ENCODE measurements at regions of chr6 and their contacts with region 1.

Region 1: DNA sequence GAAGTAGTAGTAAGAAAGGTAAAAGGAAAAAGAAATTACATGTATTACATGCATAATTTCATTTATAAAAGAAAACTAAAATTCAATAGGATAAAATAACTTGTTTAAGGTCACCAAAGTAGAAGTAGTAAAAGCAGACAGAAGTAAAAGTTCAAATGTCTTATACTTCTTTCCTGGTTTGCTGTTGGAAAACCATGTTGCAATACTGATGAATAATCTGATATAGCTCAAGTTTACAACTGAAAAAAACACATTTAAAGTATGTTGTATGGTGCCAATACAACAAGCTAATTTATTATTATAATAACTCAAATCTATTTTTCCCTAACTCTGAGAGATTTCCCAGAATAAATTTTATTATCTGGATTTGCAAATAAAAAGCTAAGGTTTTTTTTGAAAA is 78.3 kb downstream of the PHIP start:
- DNase-seq: no peak
- ATAC-seq: no peak
- H3K4me3 ChIP-seq: no peak overlapping the region
- H3K27ac ChIP-seq: no peak overlapping the region
- H3K4me1 ChIP-seq: no peaks in the 10 kb centered on the region
- H3K27me3 ChIP-seq: no peaks in the 10 kb centered on the region
- CTCF ChIP-seq: no peak

Region 2: DNA sequence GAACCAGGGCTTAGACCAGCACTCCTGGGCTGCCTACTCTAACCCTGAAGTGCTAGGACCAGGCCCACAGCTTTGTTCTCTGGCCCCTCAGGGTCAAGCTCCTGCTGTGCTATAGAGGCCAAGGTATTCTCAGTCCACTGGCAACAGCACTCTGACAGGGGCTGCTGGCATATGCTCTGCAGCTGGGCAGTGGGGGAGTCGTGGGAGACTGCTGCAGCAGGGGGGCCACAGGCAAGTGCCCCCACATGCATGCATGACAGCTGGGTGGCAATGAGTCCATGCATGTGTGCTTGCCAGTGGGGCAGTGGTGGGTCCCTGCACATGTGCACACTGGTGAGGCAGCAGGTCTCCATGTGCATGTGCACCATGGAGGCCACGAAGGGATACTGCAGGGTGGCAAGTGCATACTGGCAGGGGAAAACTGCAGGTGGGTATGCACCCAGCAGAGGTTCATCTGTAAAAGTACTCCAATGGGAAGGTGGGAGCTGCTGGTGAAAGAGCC is 497.3 kb before region 1 on chr6:
- intact Hi-C with region 1: no loop called
- DNase-seq: no peak
- ATAC-seq: no peak
- H3K4me3 ChIP-seq: no peak overlapping the region
- H3K27ac ChIP-seq: no peak overlapping the region
- H3K4me1 ChIP-seq: no peaks in the 10 kb centered on the region
- H3K27me3 ChIP-seq: no peaks in the 10 kb centered on the region
- CTCF ChIP-seq: no peak

Region 3: DNA sequence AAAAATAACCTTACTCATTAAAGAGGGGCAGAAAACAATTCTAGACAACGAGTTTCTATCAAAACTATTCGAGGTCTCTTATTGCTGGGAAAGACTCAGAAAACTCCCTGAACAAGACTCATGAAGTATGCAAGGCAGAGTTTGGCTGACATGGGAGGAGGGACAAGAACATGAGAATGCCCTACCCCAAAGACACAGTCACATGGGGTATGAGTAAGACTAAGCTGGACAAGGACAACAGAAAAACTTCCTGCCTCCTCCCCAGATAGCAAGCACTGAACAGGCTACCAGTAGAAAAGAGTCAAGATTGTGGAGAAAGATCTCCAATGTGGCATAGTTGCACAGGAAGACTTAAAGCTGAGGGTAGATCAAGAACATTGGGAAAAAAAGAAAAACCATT is 118.0 kb after region 1 on chr6:
- intact Hi-C with region 1: no loop called
- DNase-seq: no peak
- ATAC-seq: no peak
- H3K4me3 ChIP-seq: no peak overlapping the region
- H3K27ac ChIP-seq: no peak overlapping the region
- H3K4me1 ChIP-seq: no peaks in the 10 kb centered on the region
- H3K27me3 ChIP-seq: no peaks in the 10 kb centered on the region
- CTCF ChIP-seq: no peak

Region 4: DNA sequence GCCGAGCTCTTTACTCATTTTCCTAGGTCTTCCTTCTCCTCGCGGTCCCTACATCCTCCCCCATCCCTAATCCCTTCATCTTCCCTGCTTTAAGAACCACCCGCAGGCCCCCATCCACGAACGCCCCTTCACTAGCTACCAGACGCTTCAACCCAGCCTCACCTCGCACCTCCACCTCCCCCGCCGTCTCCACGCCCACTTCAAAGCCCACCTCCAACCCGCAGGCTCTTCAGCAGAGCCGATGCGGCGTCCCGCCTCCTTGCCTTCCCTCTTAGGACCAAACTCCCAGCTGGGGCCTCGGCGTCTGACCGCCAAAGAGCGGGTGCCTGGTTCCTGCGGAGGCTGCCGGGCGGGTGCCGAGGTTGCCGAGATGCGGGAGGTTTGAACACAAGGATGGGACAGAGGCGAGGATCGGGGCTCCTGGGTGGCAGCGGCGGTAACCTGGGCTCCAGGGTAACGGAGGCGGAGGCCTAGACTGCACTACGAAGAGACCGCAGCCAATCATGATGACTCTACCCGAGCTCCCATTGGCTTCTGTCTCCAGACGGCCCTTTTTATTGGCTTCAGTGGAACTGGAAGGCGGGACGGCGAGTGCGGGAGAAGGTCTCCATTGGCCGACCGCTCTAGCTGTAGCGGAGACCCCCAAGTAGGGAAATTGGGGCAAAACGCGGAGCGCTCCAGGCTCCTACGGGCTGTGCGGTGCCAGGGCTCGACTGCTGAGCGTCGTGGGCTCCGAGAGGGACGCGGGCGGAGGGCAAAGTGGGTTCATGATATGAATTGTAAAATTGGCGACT is 537.4 kb after region 1 on chr6 and contains the start of gene LCA5:
- intact Hi-C with region 1: loop called in 1 of 10 experiments (anchors 10 kb)
- DNase-seq: peak; percentile 88 to 95
- ATAC-seq: peak; percentile 98 to 100 (median 99)
- H3K4me3 ChIP-seq: peak within 1 kb of the TSS; percentile 58 to 94 (median 78)
- H3K27ac ChIP-seq: peak within 1 kb of the TSS; percentile 57 to 93 (median 88)
- H3K4me1 ChIP-seq: peaks cover 0 to 31% (median 18%) of the 10 kb centered on the region in 9 donors
- H3K27me3 ChIP-seq: no peaks in the 10 kb centered on the region
- CTCF ChIP-seq: no peak
- total RNA-seq, gene LCA5: 1.4 to 2.7 (median 2.2) TPM